Activated CD8-positive, alpha-beta memory T cell treated with anti-CD3 and anti-CD28 coated beads, Interleukin-2, amount 10 ng/mL, durations not matched to agents 7 days and 5 days (primary cell): ENCODE measurements at regions of chr11 and their contacts with region 1.

Region 1: GRCh38 chr11:47213985-47214564 is 699 bp upstream of the DDB2 start:
- DNase-seq: peak; percentile 94
- ATAC-seq: peak; percentile 82
- H3K4me3 Mint-ChIP-seq: peak overlapping the region; percentile 97
- H3K27ac Mint-ChIP-seq: peak overlapping the region; percentile 100
- H3K4me1 Mint-ChIP-seq: peaks cover 43% of the 10 kb centered on the region
- H3K27me3 Mint-ChIP-seq: no peaks in the 10 kb centered on the region

Region 2: GRCh38 chr11:47176328-47177228 is 37.5 kb before region 1 on chr11 and contains the start of gene ARFGAP2:
- CTCF ChIA-PET with region 1: interaction called, 58 read pairs
- DNase-seq: peak; percentile 97
- ATAC-seq: peak; percentile 95
- H3K4me3 Mint-ChIP-seq: peak within 1 kb of the TSS; percentile 94
- H3K27ac Mint-ChIP-seq: peak within 1 kb of the TSS; percentile 100
- H3K4me1 Mint-ChIP-seq: peaks cover 52% of the 10 kb centered on the region
- H3K27me3 Mint-ChIP-seq: no peaks in the 10 kb centered on the region
- total RNA-seq, gene ARFGAP2: 103 TPM

Region 3: GRCh38 chr11:47186076-47186936 is 27.8 kb before region 1 on chr11 and contains the start of gene PACSIN3:
- CTCF ChIA-PET with region 1: interaction called, 12 read pairs
- DNase-seq: no peak
- ATAC-seq: peak; percentile 81
- H3K4me3 Mint-ChIP-seq: peak within 1 kb of the TSS; percentile 62
- H3K27ac Mint-ChIP-seq: no peak within 1 kb of the TSS
- H3K4me1 Mint-ChIP-seq: peaks cover 13% of the 10 kb centered on the region
- H3K27me3 Mint-ChIP-seq: peaks cover 48% of the 10 kb centered on the region
- total RNA-seq, gene PACSIN3: 0.64 to 2.2 TPM

Region 4: DNA sequence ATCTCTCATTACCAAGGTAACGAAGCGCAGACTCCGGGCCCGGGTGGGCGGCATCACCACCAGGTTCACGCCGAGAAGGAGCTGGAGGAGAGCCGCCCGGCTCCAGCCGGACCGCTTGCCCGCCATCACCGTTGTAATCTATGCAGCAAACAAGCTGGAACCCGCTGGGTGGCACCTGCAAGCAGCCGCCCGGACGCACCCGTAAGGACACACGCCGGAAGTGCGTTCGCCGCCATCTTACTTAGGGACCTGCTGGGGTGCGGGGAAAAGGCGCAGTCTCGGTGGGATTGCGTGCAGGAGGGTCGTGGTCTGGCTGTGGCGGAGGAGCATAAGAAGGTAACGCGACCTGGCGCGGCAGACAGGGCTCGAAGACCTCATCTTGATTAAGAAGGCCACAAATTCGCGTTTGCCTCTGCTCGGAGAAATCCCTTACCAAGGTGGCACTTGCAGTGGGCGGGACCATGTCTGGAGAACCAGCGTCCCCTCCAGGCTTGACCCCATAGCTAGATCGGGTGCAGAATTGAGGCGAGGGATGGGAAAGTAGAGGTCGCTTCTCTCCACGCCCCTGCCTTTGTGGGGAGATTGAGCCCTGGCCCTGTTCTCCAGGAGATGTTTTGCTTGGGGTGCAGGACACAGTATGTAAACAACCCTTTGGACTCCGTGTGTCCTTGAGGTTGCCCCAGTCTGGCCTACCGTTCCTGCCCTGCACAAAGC is 34.7 kb after region 1 on chr11 and contains the start of gene ACP2:
- CTCF ChIA-PET with region 1: interaction called, 10 read pairs
- DNase-seq: peak; percentile 93
- ATAC-seq: peak; percentile 98
- H3K4me3 Mint-ChIP-seq: peak within 1 kb of the TSS; percentile 89
- H3K27ac Mint-ChIP-seq: peak within 1 kb of the TSS; percentile 94
- H3K4me1 Mint-ChIP-seq: peaks cover 29% of the 10 kb centered on the region
- H3K27me3 Mint-ChIP-seq: no peaks in the 10 kb centered on the region
- total RNA-seq, gene ACP2: 26.0 to 29.7 TPM

Region 5: GRCh38 chr11:47269002-47269828 is 55.1 kb after region 1 on chr11:
- CTCF ChIA-PET with region 1: interaction called, 10 read pairs
- DNase-seq: peak; percentile 90
- ATAC-seq: peak; percentile 64
- H3K4me3 Mint-ChIP-seq: peak overlapping the region; percentile 78
- H3K27ac Mint-ChIP-seq: peak overlapping the region; percentile 98
- H3K4me1 Mint-ChIP-seq: peaks cover 62% of the 10 kb centered on the region
- H3K27me3 Mint-ChIP-seq: no peaks in the 10 kb centered on the region